Activated naive CD4-positive, alpha-beta T cell treated with anti-CD3 and anti-CD28 coated beads for 36 hours (primary cell): ENCODE measurements at regions of chr20 and their contacts with region 1.

Region 1: GRCh38 chr20:13231031-13231752 is 10.1 kb downstream of the ISM1 start:
- DNase-seq: peak; percentile 54
- H3K4me3 Mint-ChIP-seq: peak overlapping the region; percentile 10
- H3K27ac Mint-ChIP-seq: peak overlapping the region; percentile 57
- H3K4me1 Mint-ChIP-seq: peaks cover 36% of the 10 kb centered on the region
- H3K27me3 Mint-ChIP-seq: no peaks in the 10 kb centered on the region

Region 2: GRCh38 chr20:13243826-13244376 is 12.7 kb after region 1 on chr20:
- CTCF ChIA-PET with region 1: interaction called, 3 read pairs
- intact Hi-C with region 1: loop called (anchors 1 kb)
- DNase-seq: no peak
- H3K4me3 Mint-ChIP-seq: no peak overlapping the region
- H3K27ac Mint-ChIP-seq: no peak overlapping the region
- H3K4me1 Mint-ChIP-seq: peaks cover 38% of the 10 kb centered on the region
- H3K27me3 Mint-ChIP-seq: no peaks in the 10 kb centered on the region

Region 3: GRCh38 chr20:13336308-13337089 is 105.3 kb after region 1 on chr20:
- CTCF ChIA-PET with region 1: no interaction called
- intact Hi-C with region 1: loop called (anchors 1 kb)
- DNase-seq: peak; percentile 42
- H3K4me3 Mint-ChIP-seq: no peak overlapping the region
- H3K27ac Mint-ChIP-seq: no peak overlapping the region
- H3K4me1 Mint-ChIP-seq: peaks cover 17% of the 10 kb centered on the region
- H3K27me3 Mint-ChIP-seq: peaks cover 5% of the 10 kb centered on the region

Region 4: DNA sequence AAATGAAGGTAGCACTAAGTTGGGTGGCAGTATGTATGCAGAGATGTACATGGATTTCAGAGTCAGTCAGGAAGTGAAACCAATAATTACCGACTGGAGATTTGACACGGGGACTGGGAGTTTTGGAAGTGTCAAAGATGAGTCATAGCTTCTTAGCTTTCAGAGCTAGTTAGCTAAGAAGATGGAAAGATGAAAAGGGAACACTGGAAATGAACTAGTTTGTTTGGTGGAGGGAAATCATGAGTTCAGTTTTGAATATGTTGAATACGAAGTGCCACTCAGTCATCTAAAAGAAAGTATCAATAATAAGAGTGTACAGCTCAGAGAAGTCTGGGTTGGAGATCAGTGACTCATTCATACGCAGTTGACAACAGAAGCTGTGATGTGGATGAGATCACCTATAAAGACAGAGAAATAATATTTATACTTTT is 546.0 kb after region 1 on chr20:
- CTCF ChIA-PET with region 1: no interaction called
- intact Hi-C with region 1: loop called (anchors 5 kb)
- DNase-seq: no peak
- H3K4me3 Mint-ChIP-seq: no peak overlapping the region
- H3K27ac Mint-ChIP-seq: peak overlapping the region; percentile 43
- H3K4me1 Mint-ChIP-seq: peaks cover 51% of the 10 kb centered on the region
- H3K27me3 Mint-ChIP-seq: no peaks in the 10 kb centered on the region

Region 5: GRCh38 chr20:13788167-13788834 is 557.1 kb after region 1 on chr20:
- CTCF ChIA-PET with region 1: no interaction called
- intact Hi-C with region 1: no loop called
- DNase-seq: peak; percentile 57
- H3K4me3 Mint-ChIP-seq: no peak overlapping the region
- H3K27ac Mint-ChIP-seq: no peak overlapping the region
- H3K4me1 Mint-ChIP-seq: peaks cover 26% of the 10 kb centered on the region
- H3K27me3 Mint-ChIP-seq: no peaks in the 10 kb centered on the region